MCF 10A (cell line): ENCODE measurements at regions of chr19 and their contacts with region 1.

Region 1: GRCh38 chr19:4375164-4376027 is 25.0 kb downstream of the SH3GL1 start:
- DNase-seq: peak; percentile 80
- H3K4me3 Mint-ChIP-seq: peak overlapping the region; percentile 66
- H3K27ac Mint-ChIP-seq: peak overlapping the region; percentile 83
- H3K4me1 Mint-ChIP-seq: peaks cover 53% of the 10 kb centered on the region
- H3K27me3 Mint-ChIP-seq: no peaks in the 10 kb centered on the region
- CTCF ChIP-seq: no peak

Region 2: GRCh38 chr19:4197625-4198466 is 177.6 kb before region 1 on chr19:
- CTCF ChIA-PET with region 1: no interaction called
- POLR2A ChIA-PET with region 1: no interaction called
- intact Hi-C with region 1: no loop called
- DNase-seq: no peak
- H3K4me3 Mint-ChIP-seq: no peak overlapping the region
- H3K27ac Mint-ChIP-seq: no peak overlapping the region
- H3K4me1 Mint-ChIP-seq: peaks cover 15% of the 10 kb centered on the region
- H3K27me3 Mint-ChIP-seq: peaks cover 62% of the 10 kb centered on the region
- CTCF ChIP-seq: no peak

Region 3: DNA sequence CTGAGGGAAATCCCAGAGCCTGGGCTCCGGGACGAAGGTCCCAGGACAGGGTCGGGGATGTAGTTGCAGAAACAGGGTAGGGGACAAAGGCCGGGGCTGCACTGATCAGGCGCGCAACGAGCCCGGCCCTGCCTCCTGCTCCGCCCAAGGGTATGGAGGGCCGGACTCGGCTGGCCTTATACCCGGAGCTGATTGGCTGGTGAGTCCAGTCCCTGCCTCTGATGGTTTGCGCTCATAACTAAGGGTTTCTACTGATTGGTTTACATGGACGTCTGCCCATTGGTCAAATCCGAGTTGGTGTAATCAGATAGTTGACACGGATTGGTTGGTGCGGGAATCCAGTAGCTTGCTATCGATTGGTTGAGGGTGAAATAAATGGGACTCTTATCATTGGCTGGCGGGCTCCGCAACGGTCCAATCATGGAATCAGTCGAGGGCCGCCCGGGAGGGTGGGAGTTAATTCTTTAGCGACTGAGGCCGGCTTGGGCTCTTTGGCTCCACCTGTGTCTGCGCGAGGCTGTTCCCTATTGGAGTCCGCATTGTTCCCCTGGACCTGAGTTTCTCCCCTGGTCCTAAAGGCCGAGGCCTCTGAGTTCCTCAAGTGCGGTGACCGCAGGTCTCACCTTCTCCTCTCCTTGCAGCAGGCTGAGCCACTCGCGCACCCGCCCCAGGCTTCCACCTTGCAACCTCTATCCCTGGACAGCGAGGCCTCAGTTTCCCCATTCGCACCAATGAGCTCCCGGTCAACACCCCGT is 32.6 kb before region 1 on chr19:
- CTCF ChIA-PET with region 1: interaction called, 4 read pairs
- POLR2A ChIA-PET with region 1: interaction called, 33 read pairs
- intact Hi-C with region 1: no loop called
- DNase-seq: peak; percentile 100
- H3K4me3 Mint-ChIP-seq: peak overlapping the region; percentile 88
- H3K27ac Mint-ChIP-seq: peak overlapping the region; percentile 42
- H3K4me1 Mint-ChIP-seq: peaks cover 7% of the 10 kb centered on the region
- H3K27me3 Mint-ChIP-seq: no peaks in the 10 kb centered on the region
- CTCF ChIP-seq: no peak

Region 4: GRCh38 chr19:4390567-4391305 is 15.3 kb after region 1 on chr19:
- CTCF ChIA-PET with region 1: interaction called, 8 read pairs
- POLR2A ChIA-PET with region 1: interaction called, 19 read pairs
- intact Hi-C with region 1: no loop called
- DNase-seq: no peak
- H3K4me3 Mint-ChIP-seq: peak overlapping the region; percentile 28
- H3K27ac Mint-ChIP-seq: peak overlapping the region; percentile 93
- H3K4me1 Mint-ChIP-seq: peaks cover 51% of the 10 kb centered on the region
- H3K27me3 Mint-ChIP-seq: no peaks in the 10 kb centered on the region
- CTCF ChIP-seq: no peak

Region 5: DNA sequence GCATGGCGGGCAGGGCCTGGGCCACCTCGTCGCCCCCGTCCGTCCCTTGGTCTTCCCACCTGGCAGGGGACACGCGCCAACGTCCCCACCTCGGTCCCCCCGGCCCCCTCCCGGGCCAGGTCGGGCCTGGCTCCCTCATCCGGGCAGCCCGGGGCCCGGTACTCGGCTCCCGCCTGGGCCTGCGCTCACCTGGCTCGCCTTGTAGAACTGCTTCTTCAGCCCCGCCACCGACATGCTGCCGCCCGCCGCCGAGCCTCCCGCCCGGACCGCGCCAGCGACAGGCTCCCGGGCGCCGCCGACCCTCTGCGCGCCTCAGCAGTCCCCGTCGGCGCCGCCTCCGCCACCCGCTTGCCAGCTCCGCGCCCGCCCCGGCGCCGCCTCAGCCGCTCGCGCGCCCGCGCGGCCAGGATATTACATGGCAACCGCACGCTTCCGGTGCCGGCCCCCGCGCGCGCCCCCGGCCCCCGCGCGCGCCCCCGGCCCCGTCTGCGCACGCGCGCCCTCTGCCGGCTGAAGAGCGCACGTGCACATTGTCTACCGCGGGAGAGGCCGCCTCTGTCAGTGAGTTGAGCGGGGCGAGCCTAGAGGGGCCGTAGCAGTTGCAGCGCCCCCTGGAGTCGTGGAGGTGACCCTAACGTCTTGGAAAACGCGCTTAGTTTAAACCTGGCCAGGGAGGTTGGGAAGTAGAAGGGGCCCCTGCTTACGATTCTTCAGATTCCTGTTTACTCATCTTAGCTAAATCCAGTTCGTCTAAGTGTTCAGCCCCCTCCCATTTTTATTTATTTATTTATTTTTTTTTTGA is 24.9 kb after region 1 on chr19 and contains the start of gene SH3GL1:
- CTCF ChIA-PET with region 1: interaction called, 16 read pairs
- POLR2A ChIA-PET with region 1: interaction called, 93 read pairs
- intact Hi-C with region 1: loop called (anchors 1 kb)
- DNase-seq: peak; percentile 90
- H3K4me3 Mint-ChIP-seq: peak within 1 kb of the TSS; percentile 78
- H3K27ac Mint-ChIP-seq: peak within 1 kb of the TSS; percentile 94
- H3K4me1 Mint-ChIP-seq: peaks cover 33% of the 10 kb centered on the region
- H3K27me3 Mint-ChIP-seq: no peaks in the 10 kb centered on the region
- CTCF ChIP-seq: peak; percentile 98
- total RNA-seq, gene SH3GL1: 94.4 and 106 TPM in 2 replicates

Region 6: DNA sequence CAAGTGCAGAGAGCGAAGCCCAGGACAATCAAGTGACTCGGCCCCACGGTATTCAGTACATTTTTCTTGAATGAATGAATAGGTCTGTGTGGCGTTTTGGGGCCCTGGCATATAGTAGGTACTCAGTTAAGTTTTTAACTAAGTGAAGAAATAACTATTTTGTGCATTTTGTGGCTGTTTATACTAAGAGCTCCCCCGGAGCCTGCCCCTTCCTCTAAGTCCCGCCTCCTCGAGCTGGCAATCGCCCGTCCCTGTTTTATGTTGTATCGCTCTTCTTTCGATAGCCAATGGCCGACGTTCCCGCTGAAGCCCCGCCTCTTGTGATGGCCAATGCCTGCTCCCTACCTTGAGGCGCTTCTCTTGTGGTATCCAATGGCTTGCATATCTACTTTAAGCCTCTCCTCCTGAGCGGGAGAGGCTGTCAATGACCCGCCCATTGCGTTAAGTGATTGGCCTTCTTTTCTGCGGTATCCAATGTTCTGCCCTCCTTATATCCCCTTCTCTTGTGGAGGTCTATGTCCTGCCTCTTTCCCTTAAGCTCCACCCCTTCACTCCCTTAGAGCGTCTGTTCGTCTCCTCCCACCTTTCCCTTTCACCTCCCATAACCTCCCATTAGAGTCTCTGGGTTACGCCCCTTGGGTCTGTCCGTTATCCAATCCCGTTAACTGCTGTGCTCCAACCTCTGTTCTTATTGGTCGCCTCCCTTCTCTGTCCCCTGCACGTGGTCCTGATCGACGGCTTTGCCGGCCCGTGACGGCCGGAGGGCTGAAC is 96.2 kb after region 1 on chr19:
- CTCF ChIA-PET with region 1: interaction called, 3 read pairs
- POLR2A ChIA-PET with region 1: interaction called, 13 read pairs
- intact Hi-C with region 1: no loop called
- DNase-seq: peak; percentile 100
- H3K4me3 Mint-ChIP-seq: no peak overlapping the region
- H3K27ac Mint-ChIP-seq: no peak overlapping the region
- H3K4me1 Mint-ChIP-seq: peaks cover 18% of the 10 kb centered on the region
- H3K27me3 Mint-ChIP-seq: no peaks in the 10 kb centered on the region
- CTCF ChIP-seq: no peak